AG04450 (cell line): ENCODE measurements at regions of chr9 and their contacts with region 1.

Region 1: GRCh38 chr9:137240861-137241489 is at the start of gene TUBB4B:
- DNase-seq: peak; percentile 100
- H3K4me3 ChIP-seq: peak within 1 kb of the TSS; percentile 82
- H3K27ac ChIP-seq: peak within 1 kb of the TSS; percentile 83
- H3K27me3 ChIP-seq: no peaks in the 10 kb centered on the region
- CTCF ChIP-seq: no peak
- polyA plus RNA-seq, gene TUBB4B: 223 and 262 TPM in 2 replicates

Region 2: GRCh38 chr9:137107312-137107921 is 133.6 kb before region 1 on chr9:
- CTCF ChIA-PET with region 1: no interaction called
- POLR2A ChIA-PET with region 1: no interaction called
- DNase-seq: no peak
- H3K4me3 ChIP-seq: no peak overlapping the region
- H3K27ac ChIP-seq: no peak overlapping the region
- H3K27me3 ChIP-seq: no peaks in the 10 kb centered on the region
- CTCF ChIP-seq: no peak

Region 3: DNA sequence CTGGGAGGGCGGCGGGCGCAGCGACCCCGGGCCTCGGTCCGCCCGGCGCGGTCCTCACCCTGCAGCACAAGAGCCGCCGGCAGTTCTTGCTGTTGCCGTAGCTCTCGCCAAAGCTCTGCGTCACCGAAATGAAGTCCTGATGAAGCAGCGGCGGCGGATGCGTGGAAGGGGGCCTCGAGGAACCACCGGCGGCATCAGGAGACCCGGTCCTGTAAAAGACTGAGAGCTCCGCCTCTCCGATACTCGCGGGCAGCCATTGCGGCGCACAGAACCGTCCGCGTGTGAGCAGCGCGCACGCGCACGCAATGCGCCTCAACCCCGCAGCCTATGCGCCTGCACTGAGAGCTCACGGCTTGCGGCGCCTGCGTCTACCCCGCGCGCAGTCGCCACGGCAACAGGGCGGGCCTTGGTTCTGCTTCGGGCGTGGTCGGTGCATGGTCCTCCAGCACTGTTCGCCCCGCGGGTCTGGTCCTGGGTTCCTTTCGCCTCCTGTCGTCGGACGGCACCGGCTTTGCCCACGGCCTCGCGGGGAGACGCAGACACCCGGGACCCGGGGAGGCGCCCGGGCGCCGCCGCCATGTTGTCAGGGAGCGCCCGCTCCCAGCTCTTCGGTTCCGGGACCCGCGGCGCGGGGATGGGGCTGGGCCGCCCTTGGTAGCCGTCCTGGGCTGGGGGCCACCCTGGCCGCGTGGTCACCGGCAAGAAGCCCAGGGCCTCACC is 111.4 kb before region 1 on chr9:
- CTCF ChIA-PET with region 1: interaction called, 6 read pairs
- POLR2A ChIA-PET with region 1: interaction called, 28 read pairs
- DNase-seq: peak; percentile 75
- H3K4me3 ChIP-seq: peak overlapping the region; percentile 77
- H3K27ac ChIP-seq: peak overlapping the region; percentile 31
- H3K27me3 ChIP-seq: no peaks in the 10 kb centered on the region
- CTCF ChIP-seq: no peak

Region 4: DNA sequence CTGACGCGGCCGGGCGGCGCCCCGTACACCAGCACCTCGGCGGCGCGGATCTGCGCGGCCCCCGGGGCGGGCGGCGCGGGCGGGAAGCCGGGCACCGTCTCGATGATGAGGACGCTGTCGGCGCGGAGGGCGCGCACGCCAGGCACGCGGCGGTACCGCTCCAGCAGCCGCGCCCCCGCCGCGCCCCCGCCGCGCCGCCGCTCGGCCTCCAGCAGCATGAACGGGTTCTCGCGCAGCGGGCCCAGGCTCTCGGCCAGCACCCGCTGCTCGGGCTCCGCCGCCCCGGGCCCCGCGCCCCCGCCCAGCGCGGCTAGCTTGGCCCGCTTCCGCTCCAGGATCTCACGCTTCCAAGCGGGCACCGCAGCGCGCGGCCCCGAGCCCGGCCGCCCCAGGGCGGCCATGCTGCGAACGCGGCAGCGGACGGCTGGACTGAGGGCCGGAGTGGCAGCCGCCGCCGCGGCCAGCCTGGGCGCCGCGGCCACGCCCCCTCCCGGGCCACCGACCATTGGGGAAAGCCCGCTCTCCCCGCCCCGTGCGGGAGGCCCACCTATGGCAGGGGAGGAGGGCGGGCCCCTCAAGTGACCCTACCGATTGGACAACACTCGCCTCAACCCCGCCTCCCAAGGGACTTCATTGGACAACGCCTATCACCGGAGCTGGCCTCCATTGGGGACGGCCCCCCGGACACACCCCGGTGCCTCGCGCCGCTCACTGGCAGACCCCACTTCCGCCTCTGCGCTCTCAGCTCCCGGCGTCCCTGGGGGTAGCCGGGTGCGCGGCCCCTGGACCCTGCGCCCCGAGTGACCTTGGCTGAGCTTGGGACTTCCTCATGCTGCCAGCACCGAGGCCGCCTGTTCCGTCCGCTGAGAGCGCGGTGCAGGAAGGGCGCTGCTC is 40.4 kb before region 1 on chr9 and contains the start of gene TPRN:
- CTCF ChIA-PET with region 1: interaction called, 12 read pairs
- POLR2A ChIA-PET with region 1: interaction called, 23 read pairs
- DNase-seq: peak; percentile 94
- H3K4me3 ChIP-seq: peak within 1 kb of the TSS; percentile 77
- H3K27ac ChIP-seq: no peak within 1 kb of the TSS
- H3K27me3 ChIP-seq: no peaks in the 10 kb centered on the region
- CTCF ChIP-seq: no peak
- polyA plus RNA-seq, gene TPRN: 2.8 and 3.8 TPM in 2 replicates

Region 5: DNA sequence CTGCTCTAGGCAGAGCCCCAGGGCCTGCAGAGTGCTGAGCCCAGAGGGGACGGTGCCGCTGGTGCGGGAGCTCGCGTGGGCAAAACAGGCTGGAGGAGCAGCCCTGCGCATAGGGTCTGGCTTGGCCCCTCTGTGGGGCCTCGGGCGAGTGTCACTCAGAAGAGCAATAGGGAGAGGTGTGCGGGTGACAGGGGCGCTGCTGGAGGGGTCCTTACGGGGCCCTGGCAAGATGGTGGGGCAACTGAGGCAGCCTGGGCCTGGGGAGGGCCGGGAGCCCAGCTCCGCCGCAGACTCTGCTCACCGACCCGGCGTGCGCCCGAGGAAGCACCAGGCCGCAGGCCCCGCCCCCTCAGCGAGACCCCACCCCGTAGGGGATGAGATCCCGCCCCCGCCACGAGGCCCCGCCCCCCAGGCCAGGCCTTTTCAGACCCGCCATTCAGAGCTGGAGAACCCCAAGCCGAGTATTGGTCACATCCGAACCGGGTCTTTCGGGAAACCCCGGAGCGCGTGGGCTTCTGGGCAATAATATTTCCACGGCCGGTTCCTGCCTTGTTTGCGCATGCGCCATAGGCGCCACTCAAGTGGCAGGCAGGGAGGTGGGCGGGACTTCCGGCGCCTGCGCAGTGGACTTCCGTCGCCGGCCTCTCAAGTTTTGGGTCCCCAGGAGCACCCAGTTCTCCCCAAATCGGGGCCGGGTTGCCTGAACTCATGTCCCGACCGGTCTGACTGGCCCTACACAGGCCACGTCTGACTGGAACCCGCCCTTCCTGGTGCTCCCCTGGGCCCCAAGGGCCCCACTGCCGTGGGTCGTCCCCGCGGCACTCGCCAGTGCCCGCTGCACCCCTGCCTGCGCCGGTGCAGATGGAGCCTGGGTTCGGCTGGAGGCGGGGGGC is 17.7 kb before region 1 on chr9:
- CTCF ChIA-PET with region 1: interaction called, 29 read pairs
- POLR2A ChIA-PET with region 1: interaction called, 28 read pairs
- DNase-seq: peak; percentile 96
- H3K4me3 ChIP-seq: peak overlapping the region; percentile 80
- H3K27ac ChIP-seq: peak overlapping the region; percentile 65
- H3K27me3 ChIP-seq: no peaks in the 10 kb centered on the region
- CTCF ChIP-seq: no peak

Region 6: DNA sequence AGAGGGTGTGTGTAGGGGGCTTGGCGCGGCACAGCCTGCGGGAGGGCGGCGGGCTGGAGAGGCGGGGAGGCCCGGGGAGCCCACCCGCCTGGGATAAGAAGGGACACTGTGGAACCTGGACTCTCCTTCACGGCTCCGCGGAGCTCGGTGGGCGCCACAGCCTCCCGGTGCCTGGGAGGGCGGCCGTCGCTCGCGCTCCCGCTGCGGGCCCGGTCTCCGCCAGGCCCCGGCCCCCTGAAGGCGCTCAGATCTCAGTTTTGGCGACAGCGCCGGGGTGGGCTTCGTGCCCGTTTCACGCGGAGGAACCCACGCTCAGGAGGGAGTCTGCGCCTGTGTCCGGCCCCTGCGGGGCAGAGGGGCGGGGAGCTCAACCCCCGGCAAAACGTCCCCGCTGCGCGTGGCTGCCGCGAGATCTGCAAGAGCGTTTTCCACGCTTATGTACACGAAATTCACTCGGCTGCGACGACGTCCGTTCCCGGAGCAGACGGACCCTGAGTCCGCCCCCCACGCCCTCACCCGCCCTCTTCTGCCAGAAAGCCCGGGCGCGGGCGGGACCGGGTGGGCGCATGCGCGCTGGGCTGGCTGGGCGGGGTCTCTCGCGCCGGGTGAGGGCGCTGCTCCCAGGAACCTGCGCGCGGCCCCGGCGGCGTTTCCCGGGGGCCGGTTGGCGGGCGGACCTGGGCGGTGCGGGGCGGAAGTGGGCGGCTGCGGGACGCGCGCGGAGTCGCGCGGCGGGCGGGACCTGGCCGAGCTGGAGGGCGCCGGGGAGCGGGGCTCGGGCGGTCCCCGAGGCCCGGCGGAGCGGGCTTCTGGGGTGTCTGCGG is 13.9 kb after region 1 on chr9 and contains the start of gene NELFB:
- CTCF ChIA-PET with region 1: interaction called, 18 read pairs
- POLR2A ChIA-PET with region 1: interaction called, 146 read pairs
- DNase-seq: peak; percentile 51
- H3K4me3 ChIP-seq: peak within 1 kb of the TSS; percentile 96
- H3K27ac ChIP-seq: peak within 1 kb of the TSS; percentile 31
- H3K27me3 ChIP-seq: no peaks in the 10 kb centered on the region
- CTCF ChIP-seq: no peak
- polyA plus RNA-seq, gene NELFB: 27.1 and 38.7 TPM in 2 replicates

Region 7: DNA sequence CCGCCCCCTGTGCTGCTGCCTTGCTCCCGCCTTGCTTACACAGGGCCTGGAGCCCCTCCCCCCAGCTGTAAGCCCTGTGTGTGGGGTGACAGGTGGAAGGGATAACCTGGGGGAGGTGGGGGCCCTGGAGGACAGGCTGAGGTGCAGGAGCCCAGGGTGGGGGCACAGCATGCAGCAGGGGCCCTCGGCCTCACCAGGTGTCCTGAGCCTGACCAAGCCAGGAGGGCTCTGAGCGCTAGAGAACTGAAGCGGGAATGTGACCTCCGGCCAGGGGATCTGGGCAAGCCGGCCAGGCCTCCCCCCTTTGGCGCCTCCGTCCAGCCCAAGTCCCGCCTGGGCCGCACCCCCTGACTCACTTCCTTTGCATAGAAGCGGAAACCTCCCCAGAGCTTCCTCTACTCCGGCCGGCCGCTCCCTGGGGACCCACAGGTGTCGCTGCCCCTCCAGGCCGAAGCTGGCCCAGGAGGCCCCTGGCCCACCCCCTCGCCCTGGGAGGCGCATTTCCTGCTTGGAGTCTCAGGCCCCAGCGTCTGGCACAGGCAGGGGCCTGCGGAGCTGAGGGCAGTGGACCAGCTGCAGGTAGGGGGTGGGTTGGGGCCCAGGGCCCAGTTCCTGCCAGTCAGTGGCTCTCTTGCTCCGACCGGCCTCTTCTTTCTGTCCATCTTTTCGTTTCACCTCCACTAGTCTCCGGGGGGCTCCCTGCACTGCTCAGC is 36.5 kb after region 1 on chr9 and contains the start of gene TOR4A:
- CTCF ChIA-PET with region 1: interaction called, 5 read pairs
- POLR2A ChIA-PET with region 1: interaction called, 21 read pairs
- DNase-seq: peak; percentile 54
- H3K4me3 ChIP-seq: peak within 1 kb of the TSS; percentile 77
- H3K27ac ChIP-seq: peak within 1 kb of the TSS; percentile 84
- H3K27me3 ChIP-seq: no peaks in the 10 kb centered on the region
- CTCF ChIP-seq: peak; percentile 38
- polyA plus RNA-seq, gene TOR4A: 14.1 and 18.7 TPM in 2 replicates